ENCODE measurements at regions of chrX and their contacts with region 1.

Region 1: GRCh38 chrX:70133303-70134115 is at the start of gene IGBP1:
- DNase-seq: peak; percentile 82
- H3K4me3 Mint-ChIP-seq: peak within 1 kb of the TSS; percentile 97
- H3K27ac Mint-ChIP-seq: peak within 1 kb of the TSS; percentile 89
- H3K4me1 Mint-ChIP-seq: peaks cover 27% of the 10 kb centered on the region
- H3K27me3 Mint-ChIP-seq: no peaks in the 10 kb centered on the region
- total RNA-seq, gene IGBP1: 48.7 to 50.8 TPM

Region 2: GRCh38 chrX:69165087-69165651 is 968.3 kb before region 1 on chrX and contains the start of gene PJA1:
- CTCF ChIA-PET with region 1: no interaction called
- intact Hi-C with region 1: loop called (anchors 5 kb)
- DNase-seq: peak; percentile 76
- H3K4me3 Mint-ChIP-seq: peak within 1 kb of the TSS; percentile 83
- H3K27ac Mint-ChIP-seq: peak within 1 kb of the TSS; percentile 82
- H3K4me1 Mint-ChIP-seq: peaks cover 33% of the 10 kb centered on the region
- H3K27me3 Mint-ChIP-seq: no peaks in the 10 kb centered on the region
- total RNA-seq, gene PJA1: 10.7 to 11.0 TPM

Region 3: DNA sequence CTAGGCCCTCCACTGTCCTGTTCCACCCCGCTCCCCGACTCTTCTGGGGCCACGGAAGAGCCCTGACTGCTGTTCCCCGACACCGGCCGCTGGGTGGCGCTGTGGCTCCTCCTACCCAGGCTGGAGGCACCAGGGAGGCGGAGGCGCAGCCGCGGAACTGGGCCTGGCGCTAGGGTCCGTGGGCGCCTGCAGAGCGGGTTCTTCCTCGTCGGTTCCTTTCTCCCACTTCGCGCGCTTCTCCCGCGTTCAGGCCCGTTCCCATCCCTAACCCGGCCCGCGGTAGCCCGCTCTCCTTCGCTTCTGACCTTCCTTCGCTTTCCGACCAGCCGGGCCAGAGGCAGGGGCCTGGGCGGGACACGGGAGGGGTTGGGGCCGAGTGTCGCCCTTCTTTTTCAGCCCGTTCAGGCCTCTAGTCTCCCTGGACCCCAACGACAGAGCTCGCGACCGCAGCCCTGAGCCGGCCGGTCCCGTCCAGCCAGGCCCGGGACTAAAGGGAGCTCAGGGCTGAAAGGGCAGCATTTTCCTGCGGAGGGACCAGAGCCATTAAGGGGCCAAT is 595.1 kb before region 1 on chrX:
- CTCF ChIA-PET with region 1: interaction called, 3 read pairs
- intact Hi-C with region 1: loop called (anchors 10 kb)
- DNase-seq: peak; percentile 79
- H3K4me3 Mint-ChIP-seq: peak overlapping the region; percentile 43
- H3K27ac Mint-ChIP-seq: no peak overlapping the region
- H3K4me1 Mint-ChIP-seq: peaks cover 10% of the 10 kb centered on the region
- H3K27me3 Mint-ChIP-seq: peaks cover 2% of the 10 kb centered on the region

Region 4: GRCh38 chrX:70030301-70030767 is 103.2 kb before region 1 on chrX:
- CTCF ChIA-PET with region 1: interaction called, 13 read pairs
- intact Hi-C with region 1: loop called (anchors 1 kb)
- DNase-seq: peak; percentile 60
- H3K4me3 Mint-ChIP-seq: no peak overlapping the region
- H3K27ac Mint-ChIP-seq: no peak overlapping the region
- H3K4me1 Mint-ChIP-seq: peaks cover 26% of the 10 kb centered on the region
- H3K27me3 Mint-ChIP-seq: no peaks in the 10 kb centered on the region

Region 5: DNA sequence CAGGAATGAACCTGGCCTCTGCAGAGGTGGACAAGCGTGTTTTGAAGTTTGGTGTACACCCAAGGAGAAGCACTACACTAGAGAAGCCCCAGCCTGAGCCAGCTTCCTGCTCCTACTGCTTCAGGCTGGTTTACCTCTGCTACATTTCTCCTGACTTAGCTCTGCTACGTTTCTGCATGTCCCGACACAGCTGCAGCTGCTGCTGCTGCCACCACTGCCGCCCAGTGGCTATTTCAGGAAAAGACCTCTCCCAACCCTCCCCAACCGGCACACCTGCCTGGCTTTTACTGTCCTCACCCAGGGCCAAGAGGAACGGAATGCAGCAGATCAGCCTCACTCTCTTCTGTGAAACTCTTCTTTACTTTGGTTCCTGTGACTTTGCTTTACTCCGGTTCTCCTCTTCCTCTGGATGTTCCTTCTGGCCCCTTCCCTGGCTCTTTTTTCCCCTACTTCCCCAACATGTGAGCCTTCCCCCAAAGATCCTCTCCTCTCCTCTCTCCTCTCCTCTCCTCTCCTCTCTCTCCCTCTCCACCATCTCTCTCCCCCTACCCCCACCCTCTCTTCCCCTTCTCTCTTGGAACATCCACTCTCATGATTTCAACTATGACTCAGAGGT is 129.6 kb after region 1 on chrX:
- CTCF ChIA-PET with region 1: no interaction called
- intact Hi-C with region 1: loop called (anchors 2 kb)
- DNase-seq: peak; percentile 59
- H3K4me3 Mint-ChIP-seq: no peak overlapping the region
- H3K27ac Mint-ChIP-seq: no peak overlapping the region
- H3K4me1 Mint-ChIP-seq: no peaks in the 10 kb centered on the region
- H3K27me3 Mint-ChIP-seq: no peaks in the 10 kb centered on the region

Region 6: GRCh38 chrX:70433848-70434351 is 300.4 kb after region 1 on chrX:
- CTCF ChIA-PET with region 1: no interaction called
- intact Hi-C with region 1: loop called (anchors 1 kb)
- DNase-seq: peak; percentile 80
- H3K4me3 Mint-ChIP-seq: peak overlapping the region; percentile 84
- H3K27ac Mint-ChIP-seq: peak overlapping the region; percentile 50
- H3K4me1 Mint-ChIP-seq: peaks cover 7% of the 10 kb centered on the region
- H3K27me3 Mint-ChIP-seq: peaks cover 11% of the 10 kb centered on the region